Common myeloid progenitor, CD34-positive (primary cell): ENCODE measurements at regions of chr17 and their contacts with region 1.

Region 1: DNA sequence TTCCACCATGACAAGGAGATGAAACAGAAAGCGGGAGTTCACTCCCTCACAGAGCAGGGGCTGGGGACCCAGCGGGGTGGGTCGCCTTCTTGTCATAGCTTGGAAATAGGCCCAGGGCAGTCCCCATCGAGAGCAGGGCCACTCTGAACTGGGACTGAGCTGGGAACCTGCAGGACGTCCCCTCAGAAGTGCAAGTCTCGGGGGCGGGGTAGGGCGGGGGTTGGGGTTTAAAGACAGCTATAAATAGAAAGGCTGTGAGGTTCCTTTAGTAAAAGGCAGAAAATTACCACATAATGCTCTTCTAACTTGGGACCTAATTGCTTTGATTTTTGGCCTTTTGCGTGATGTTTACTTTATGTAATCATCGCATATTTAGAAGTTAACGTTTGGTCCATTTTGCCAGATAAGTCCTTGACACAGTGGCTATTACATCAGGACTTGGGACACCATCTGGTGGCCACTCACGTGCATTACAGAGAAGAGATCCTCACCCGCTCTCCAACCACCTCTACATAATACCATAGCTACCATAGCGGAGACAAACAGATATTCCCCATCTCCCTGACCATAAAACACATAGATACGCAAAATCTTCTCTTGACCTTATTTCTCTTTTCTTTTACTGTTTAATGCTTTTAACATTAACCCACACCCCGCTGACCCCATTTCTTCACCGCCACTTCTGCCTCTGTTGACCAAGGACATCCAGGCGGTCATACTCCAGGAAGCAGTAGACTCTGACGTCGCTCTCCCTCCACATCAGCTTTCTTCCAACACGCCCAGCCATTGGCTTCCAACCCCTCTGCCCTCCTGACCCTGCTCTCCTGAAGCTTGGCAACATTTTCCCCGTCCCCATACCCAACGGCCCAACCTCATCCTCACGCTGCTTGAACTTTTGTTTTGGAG is 27.5 kb upstream of the PIK3R6 start:
- DNase-seq: peak; percentile 72 to 88 (median 84)
- H3K4me3 ChIP-seq: no peak overlapping the region
- H3K27ac ChIP-seq: no peak overlapping the region
- H3K4me1 ChIP-seq: peaks cover 11 to 37% (median 23%) of the 10 kb centered on the region in 4 experiments
- H3K27me3 ChIP-seq: no peaks in the 10 kb centered on the region

Region 2: DNA sequence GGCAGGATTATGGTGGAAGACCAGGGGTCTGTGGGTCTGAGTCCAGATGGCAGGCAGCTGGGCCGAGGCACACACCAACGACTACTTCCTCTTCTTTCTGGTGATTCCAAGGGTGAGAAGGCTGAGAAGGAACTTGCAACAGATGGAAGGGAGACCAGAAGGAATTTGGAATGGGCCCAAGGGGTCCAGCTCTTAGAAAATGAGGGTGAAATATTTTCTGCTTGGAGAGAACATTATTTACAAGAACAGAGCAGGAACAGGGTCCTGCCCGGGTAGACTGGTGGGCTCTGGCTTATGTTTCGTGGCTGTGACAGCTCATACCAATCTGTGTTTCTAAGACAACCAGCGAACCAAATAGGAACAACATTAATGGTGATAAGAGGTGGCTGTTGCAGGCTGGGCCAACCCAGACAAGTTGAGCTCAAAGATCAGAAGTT is 186.9 kb before region 1 on chr17:
- CTCF ChIA-PET with region 1: no interaction called
- POLR2A ChIA-PET with region 1: no interaction called
- DNase-seq: peak; percentile 71 to 93 (median 91)
- H3K4me3 ChIP-seq: peak overlapping the region in 3 of 7 experiments; percentile 2 to 37 (median 8)
- H3K27ac ChIP-seq: peak overlapping the region; percentile 82 to 85
- H3K4me1 ChIP-seq: peaks cover 6 to 45% (median 23%) of the 10 kb centered on the region in 4 experiments
- H3K27me3 ChIP-seq: no peaks in the 10 kb centered on the region

Region 3: GRCh38 chr17:8753976-8754440 is 140.9 kb before region 1 on chr17:
- CTCF ChIA-PET with region 1: interaction called, 15 read pairs
- POLR2A ChIA-PET with region 1: no interaction called
- DNase-seq: peak; percentile 44 to 59 (median 55)
- H3K4me3 ChIP-seq: no peak overlapping the region
- H3K27ac ChIP-seq: no peak overlapping the region
- H3K4me1 ChIP-seq: no peaks in the 10 kb centered on the region
- H3K27me3 ChIP-seq: peaks cover 0 to 2% (median 0%) of the 10 kb centered on the region in 5 experiments

Region 4: DNA sequence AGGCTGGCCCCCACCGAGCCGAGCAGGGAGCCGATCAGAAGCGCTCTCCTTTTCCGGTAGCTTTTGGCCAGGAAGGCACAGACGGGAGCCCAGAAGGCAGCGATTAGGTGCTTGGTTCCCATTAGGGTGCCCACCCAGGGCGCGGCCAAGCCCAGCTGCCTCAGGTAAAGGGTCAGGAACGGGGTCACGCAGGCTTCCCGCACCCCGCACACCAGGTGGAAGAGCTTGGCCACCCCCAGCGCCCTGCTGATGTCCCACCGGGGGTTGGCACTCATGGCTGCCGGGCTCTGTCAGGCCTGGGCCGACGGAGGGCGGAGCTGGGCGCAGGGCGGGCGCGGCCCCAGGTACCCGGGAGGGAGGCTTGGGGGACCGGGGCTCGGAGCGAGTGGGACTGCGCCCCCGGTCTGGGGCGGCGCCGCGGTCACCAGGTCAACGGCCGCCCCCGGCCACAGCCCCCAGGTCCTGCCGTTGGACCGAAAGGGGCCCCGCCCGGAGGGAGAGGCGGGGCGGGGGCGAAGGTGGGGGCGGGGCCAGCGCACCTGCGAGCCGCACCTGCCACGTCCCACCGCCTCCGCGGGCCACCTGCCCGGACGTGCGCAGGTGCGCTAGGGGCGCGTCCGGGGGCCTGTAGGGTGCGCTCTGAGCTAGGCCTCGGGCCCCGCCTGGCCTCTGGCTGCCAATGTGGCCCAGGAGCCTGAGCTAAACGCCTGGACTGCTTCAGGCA is 95.9 kb before region 1 on chr17 and contains the start of gene MFSD6L:
- CTCF ChIA-PET with region 1: interaction called, 24 read pairs
- POLR2A ChIA-PET with region 1: no interaction called
- DNase-seq: peak in 1 of 3 donors; percentile 44
- H3K4me3 ChIP-seq: peak within 1 kb of the TSS in 3 of 7 experiments; percentile 11 to 36 (median 13)
- H3K27ac ChIP-seq: no peak within 1 kb of the TSS
- H3K4me1 ChIP-seq: peaks cover 0 to 13% (median 6%) of the 10 kb centered on the region in 4 experiments
- H3K27me3 ChIP-seq: no peaks in the 10 kb centered on the region